ENCODE measurements at regions of chr2 and their contacts with region 1.

Region 1: DNA sequence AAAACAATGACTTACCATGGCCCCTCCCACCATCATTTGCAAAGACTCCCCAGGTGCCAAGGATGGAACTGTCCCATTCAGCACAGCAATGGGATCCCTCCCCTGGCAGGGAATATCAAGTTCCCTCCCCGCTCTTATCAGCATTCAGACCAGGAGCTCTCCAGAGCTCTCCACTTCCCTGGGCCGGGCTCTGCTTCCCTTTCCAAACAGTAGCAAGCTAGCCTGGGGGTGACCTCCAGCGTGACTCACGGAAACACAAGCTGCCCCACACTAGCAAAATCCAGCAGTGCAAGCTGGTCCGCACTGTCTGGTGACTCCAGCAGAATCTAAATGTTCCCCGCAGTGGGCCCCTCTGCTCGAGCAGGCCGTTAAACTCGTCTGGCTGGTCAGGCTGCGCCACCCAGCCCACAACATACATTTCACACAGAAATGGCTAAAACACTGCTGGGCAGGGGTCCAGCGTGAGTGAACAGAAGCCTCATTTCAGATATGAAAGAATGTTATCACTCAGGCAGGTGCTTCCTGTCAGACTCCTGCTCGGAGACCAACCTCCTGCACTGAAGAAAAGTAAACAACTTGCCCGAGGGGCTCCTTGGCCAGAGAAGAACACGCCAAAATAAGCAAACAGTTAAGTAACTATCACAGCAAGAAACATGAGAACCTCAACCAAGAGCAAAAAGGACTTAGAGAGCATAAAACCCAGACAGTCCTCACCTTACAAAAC is 33.9 kb downstream of the STAT1 start:
- DNase-seq: peak; percentile 90 to 94
- H3K4me3 ChIP-seq: peak overlapping the region; percentile 28; the same call in 1 of the 2 replicates
- H3K27ac ChIP-seq: peak overlapping the region; percentile 55
- H3K4me1 ChIP-seq: peaks cover 40% of the 10 kb centered on the region
- H3K27me3 ChIP-seq: no peaks in the 10 kb centered on the region
- CTCF ChIP-seq: no peak

Region 2: DNA sequence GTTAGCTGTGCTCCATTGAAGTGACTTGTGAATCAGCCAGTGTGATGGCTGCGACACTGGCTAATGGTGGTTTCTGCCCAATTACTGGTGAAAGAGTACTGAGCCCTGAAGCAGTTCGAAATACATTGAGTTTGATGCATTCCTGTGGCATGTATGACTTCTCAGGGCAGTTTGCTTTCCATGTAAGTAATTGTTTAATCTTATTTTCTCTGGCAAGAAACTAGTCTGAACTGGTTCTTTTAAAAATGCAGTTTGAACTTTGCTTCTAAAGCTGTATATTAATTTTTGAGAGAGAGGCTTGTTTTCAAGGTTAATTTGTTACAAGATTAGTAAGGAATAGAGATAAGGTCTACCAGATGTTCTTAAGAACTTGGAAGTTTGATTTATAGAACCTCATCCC is 52.8 kb before region 1 on chr2:
- CTCF ChIA-PET with region 1: no interaction called
- POLR2A ChIA-PET with region 1: no interaction called
- intact Hi-C with region 1: loop called (anchors 10 kb)
- DNase-seq: no peak
- H3K4me3 ChIP-seq: no peak overlapping the region
- H3K27ac ChIP-seq: no peak overlapping the region
- H3K4me1 ChIP-seq: no peaks in the 10 kb centered on the region
- H3K27me3 ChIP-seq: no peaks in the 10 kb centered on the region
- CTCF ChIP-seq: no peak

Region 3: GRCh38 chr2:190947711-190948251 is 32.3 kb before region 1 on chr2:
- CTCF ChIA-PET with region 1: interaction called, 3 read pairs
- POLR2A ChIA-PET with region 1: interaction called, 3 read pairs
- intact Hi-C with region 1: loop called (anchors 1 kb)
- DNase-seq: peak; percentile 35 to 75
- H3K4me3 ChIP-seq: no peak overlapping the region
- H3K27ac ChIP-seq: peak overlapping the region; percentile 46
- H3K4me1 ChIP-seq: peaks cover 33% of the 10 kb centered on the region
- H3K27me3 ChIP-seq: no peaks in the 10 kb centered on the region
- CTCF ChIP-seq: no peak

Measured in PC-9 (cell line).